Activated CD4-positive, alpha-beta memory T cell treated with anti-CD3 and anti-CD28 coated beads for 36 hours (primary cell): ENCODE measurements at regions of chr2 and their contacts with region 1.

Region 1: GRCh38 chr2:208040199-208041171 is 15.2 kb upstream of the PLEKHM3 start:
- DNase-seq: peak; percentile 88
- H3K4me3 Mint-ChIP-seq: no peak overlapping the region
- H3K27ac Mint-ChIP-seq: no peak overlapping the region
- H3K4me1 Mint-ChIP-seq: peaks cover 4% of the 10 kb centered on the region
- H3K27me3 Mint-ChIP-seq: peaks cover 5% of the 10 kb centered on the region

Region 2: DNA sequence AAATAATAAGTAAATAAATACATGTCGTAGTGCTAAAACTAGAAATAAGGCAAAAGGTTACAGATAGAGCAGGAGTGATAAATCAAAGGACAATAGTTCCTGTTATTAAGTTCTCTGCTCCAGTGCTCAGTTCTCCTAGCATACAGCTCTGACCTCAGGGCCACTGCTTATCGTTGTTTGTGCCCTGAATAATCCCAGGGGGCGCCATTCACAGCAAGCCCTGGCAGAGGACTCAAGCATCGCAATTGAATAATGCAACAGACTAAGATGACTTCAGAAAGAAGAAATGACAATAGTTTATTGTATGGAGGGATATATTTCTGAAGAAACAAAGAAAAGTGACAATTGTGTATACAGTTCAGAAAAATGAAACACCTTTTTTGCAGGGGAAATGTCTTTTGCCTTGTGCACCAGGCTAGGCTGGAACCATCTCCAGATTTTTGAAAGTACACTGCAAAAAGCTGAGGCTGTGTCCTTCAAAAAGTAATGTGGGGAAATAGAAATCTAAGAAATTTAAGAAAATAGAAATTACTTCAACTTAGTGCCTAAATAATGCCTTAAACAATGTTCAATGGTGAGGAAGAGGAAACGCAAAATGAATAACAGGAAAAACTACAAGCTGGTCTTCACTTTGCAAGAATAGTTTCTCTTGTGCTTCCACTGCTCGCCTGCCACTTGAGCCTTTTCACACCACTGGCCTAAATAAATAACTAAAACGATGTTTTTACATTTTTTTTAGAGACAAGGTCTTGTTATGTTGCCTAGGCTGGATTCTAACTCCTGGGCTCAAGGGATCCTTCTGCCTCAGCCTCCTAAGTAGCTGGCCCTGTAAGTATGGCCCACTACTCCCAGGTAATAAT is 348.0 kb before region 1 on chr2:
- CTCF ChIA-PET with region 1: interaction called, 10 read pairs
- POLR2A ChIA-PET with region 1: no interaction called
- intact Hi-C with region 1: loop called (anchors 1 kb)
- DNase-seq: peak; percentile 54
- H3K4me3 Mint-ChIP-seq: no peak overlapping the region
- H3K27ac Mint-ChIP-seq: no peak overlapping the region
- H3K4me1 Mint-ChIP-seq: peaks cover 7% of the 10 kb centered on the region
- H3K27me3 Mint-ChIP-seq: peaks cover 1% of the 10 kb centered on the region

Region 3: GRCh38 chr2:207746131-207746530 is 294.4 kb before region 1 on chr2:
- CTCF ChIA-PET with region 1: interaction called, 93 read pairs
- POLR2A ChIA-PET with region 1: interaction called, 3 read pairs
- intact Hi-C with region 1: loop called (anchors 1 kb)
- DNase-seq: peak; percentile 56
- H3K4me3 Mint-ChIP-seq: no peak overlapping the region
- H3K27ac Mint-ChIP-seq: no peak overlapping the region
- H3K4me1 Mint-ChIP-seq: no peaks in the 10 kb centered on the region
- H3K27me3 Mint-ChIP-seq: no peaks in the 10 kb centered on the region

Region 4: GRCh38 chr2:207974216-207974605 is 66.3 kb before region 1 on chr2:
- CTCF ChIA-PET with region 1: interaction called, 8 read pairs
- POLR2A ChIA-PET with region 1: no interaction called
- intact Hi-C with region 1: loop called (anchors 5 kb)
- DNase-seq: no peak
- H3K4me3 Mint-ChIP-seq: no peak overlapping the region
- H3K27ac Mint-ChIP-seq: no peak overlapping the region
- H3K4me1 Mint-ChIP-seq: peaks cover 9% of the 10 kb centered on the region
- H3K27me3 Mint-ChIP-seq: no peaks in the 10 kb centered on the region

Region 5: GRCh38 chr2:208057108-208057507 is 16.6 kb after region 1 on chr2:
- CTCF ChIA-PET with region 1: interaction called, 13 read pairs
- POLR2A ChIA-PET with region 1: no interaction called
- intact Hi-C with region 1: no loop called
- DNase-seq: no peak
- H3K4me3 Mint-ChIP-seq: no peak overlapping the region
- H3K27ac Mint-ChIP-seq: no peak overlapping the region
- H3K4me1 Mint-ChIP-seq: no peaks in the 10 kb centered on the region
- H3K27me3 Mint-ChIP-seq: peaks cover 6% of the 10 kb centered on the region